ENCODE measurements at regions of chr1 and their contacts with region 1.

Region 1: DNA sequence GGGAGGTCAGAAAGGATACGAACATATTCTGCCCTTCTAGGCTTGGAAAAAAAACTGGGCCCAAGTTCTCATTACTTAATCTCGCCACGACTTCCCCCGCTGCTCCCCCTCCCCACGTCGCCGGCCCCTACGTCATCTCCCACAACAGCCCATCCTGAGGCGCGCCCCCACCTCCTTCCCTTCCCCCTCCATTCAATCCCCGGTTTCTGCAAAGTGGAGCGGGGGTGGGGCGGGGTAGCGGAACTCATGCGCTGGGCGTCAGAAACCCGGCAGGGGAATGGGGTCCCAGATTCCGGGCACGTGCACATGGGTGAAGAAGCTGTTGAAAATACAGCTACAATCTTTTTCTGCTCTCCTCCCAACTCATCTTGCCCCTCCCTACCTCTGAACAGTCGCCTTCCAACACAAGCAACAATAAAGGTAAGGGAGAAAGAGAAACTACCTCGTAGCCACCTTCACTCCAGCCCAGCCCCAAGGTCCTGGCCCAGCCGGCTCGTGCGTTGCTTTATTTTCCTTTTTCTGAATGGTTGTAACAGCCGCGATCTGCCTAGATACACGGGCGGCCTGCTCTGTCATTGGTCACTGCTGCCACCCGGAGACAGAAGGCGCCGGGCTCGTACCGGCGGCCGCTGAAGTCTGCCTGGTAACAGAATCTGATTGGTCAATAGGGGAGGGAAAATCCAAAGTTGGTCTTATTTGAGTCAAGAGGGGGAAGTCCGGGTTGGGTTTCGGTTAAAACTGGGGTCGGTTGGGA is at the start of gene RFX5:
- DNase-seq: peak; percentile 96 to 97 (median 97)
- ATAC-seq: peak; percentile 99
- H3K4me3 ChIP-seq: peak within 1 kb of the TSS; percentile 54
- H3K27ac ChIP-seq: peak within 1 kb of the TSS; percentile 95
- H3K4me1 ChIP-seq: peaks cover 0 to 13% of the 10 kb centered on the region in 2 experiments; a peak in 3 of 5 replicates
- H3K27me3 ChIP-seq: no peaks in the 10 kb centered on the region
- CTCF ChIP-seq: no peak
- EP300 ChIP-seq: peak; percentile 5
- POLR2A ChIP-seq: peak; percentile 82
- RAD21 ChIP-seq: no peak
- polyA plus RNA-seq, gene RFX5: 3.8 to 4.9 TPM

Region 2: GRCh38 chr1:150979092-150980056 is 367.6 kb before region 1 on chr1:
- CTCF ChIA-PET with region 1: no interaction called
- POLR2A ChIA-PET with region 1: no interaction called
- in situ Hi-C with region 1: no loop called
- intact Hi-C with region 1: no loop called
- DNase-seq: peak; percentile 78 to 95 (median 84)
- ATAC-seq: peak; percentile 57
- H3K4me3 ChIP-seq: peak overlapping the region; percentile 7; the same call in 1 of the 2 replicates
- H3K27ac ChIP-seq: peak overlapping the region; percentile 79
- H3K4me1 ChIP-seq: peaks cover 44 to 56% of the 10 kb centered on the region in 2 experiments
- H3K27me3 ChIP-seq: no peaks in the 10 kb centered on the region
- CTCF ChIP-seq: peak; percentile 100
- EP300 ChIP-seq: peak; percentile 54; the same call in 1 of the 2 replicates
- POLR2A ChIP-seq: 0 out of 2 replicates have a peak, but pooled peaks have one; percentile 34
- RAD21 ChIP-seq: peak; percentile 89 to 94

Region 3: DNA sequence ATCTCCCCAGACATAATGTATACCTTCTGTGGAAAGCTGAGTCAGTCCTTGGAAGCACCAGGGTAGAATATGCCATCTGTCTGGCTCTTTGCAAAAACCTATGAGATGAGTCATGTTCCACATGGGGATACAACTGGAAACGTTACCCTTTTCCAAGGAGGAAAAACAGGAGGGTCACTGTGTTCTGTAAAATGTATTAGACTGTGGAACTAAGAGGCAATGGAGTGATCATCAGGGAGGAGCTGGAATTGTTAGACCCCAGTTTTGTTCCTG is 108.5 kb before region 1 on chr1:
- CTCF ChIA-PET with region 1: no interaction called
- POLR2A ChIA-PET with region 1: no interaction called
- in situ Hi-C with region 1: no loop called
- intact Hi-C with region 1: no loop called
- DNase-seq: no peak
- ATAC-seq: no peak
- H3K4me3 ChIP-seq: no peak overlapping the region
- H3K27ac ChIP-seq: no peak overlapping the region
- H3K4me1 ChIP-seq: no peaks in the 10 kb centered on the region; a peak in 1 of 5 replicates
- H3K27me3 ChIP-seq: no peaks in the 10 kb centered on the region
- CTCF ChIP-seq: no peak
- EP300 ChIP-seq: no peak
- POLR2A ChIP-seq: no peak
- RAD21 ChIP-seq: no peak

Region 4: GRCh38 chr1:151372061-151372934 is 25.4 kb after region 1 on chr1 and contains the start of gene SELENBP1:
- CTCF ChIA-PET with region 1: no interaction called
- POLR2A ChIA-PET with region 1: interaction called, 5 read pairs
- in situ Hi-C with region 1: no loop called
- intact Hi-C with region 1: loop called (anchors 1 kb)
- DNase-seq: peak; percentile 73 to 84 (median 78)
- ATAC-seq: peak; percentile 86
- H3K4me3 ChIP-seq: peak within 1 kb of the TSS; percentile 49
- H3K27ac ChIP-seq: peak within 1 kb of the TSS; percentile 65
- H3K4me1 ChIP-seq: peaks cover 32 to 48% of the 10 kb centered on the region in 2 experiments
- H3K27me3 ChIP-seq: no peaks in the 10 kb centered on the region
- CTCF ChIP-seq: no peak
- EP300 ChIP-seq: no peak
- POLR2A ChIP-seq: peak; percentile 73
- RAD21 ChIP-seq: no peak
- polyA plus RNA-seq, gene SELENBP1: 52.1 to 81.2 TPM

Region 5: GRCh38 chr1:151399890-151400495 is 53.0 kb after region 1 on chr1:
- CTCF ChIA-PET with region 1: interaction called, 3 read pairs
- POLR2A ChIA-PET with region 1: no interaction called
- in situ Hi-C with region 1: no loop called
- intact Hi-C with region 1: loop called (anchors 2 kb)
- DNase-seq: peak in 2 of 4 experiments; percentile 27 to 32
- ATAC-seq: peak; percentile 50
- H3K4me3 ChIP-seq: peak overlapping the region; percentile 86
- H3K27ac ChIP-seq: peak overlapping the region; percentile 85
- H3K4me1 ChIP-seq: peaks cover 0 to 3% of the 10 kb centered on the region in 2 experiments; a peak in 3 of 5 replicates
- H3K27me3 ChIP-seq: no peaks in the 10 kb centered on the region
- CTCF ChIP-seq: no peak
- EP300 ChIP-seq: no peak
- POLR2A ChIP-seq: no peak
- RAD21 ChIP-seq: no peak

Measured in K562 (cell line).